ENCODE measurements at regions of chr17 and their contacts with region 1.

Region 1: GRCh38 chr17:59914274-59914854 is 21.4 kb downstream of the RPS6KB1 start:
- DNase-seq: peak; percentile 54
- H3K4me3 Mint-ChIP-seq: no peak overlapping the region
- H3K27ac Mint-ChIP-seq: no peak overlapping the region
- H3K4me1 Mint-ChIP-seq: no peaks in the 10 kb centered on the region
- H3K27me3 Mint-ChIP-seq: no peaks in the 10 kb centered on the region
- CTCF ChIP-seq: peak; percentile 36

Region 2: DNA sequence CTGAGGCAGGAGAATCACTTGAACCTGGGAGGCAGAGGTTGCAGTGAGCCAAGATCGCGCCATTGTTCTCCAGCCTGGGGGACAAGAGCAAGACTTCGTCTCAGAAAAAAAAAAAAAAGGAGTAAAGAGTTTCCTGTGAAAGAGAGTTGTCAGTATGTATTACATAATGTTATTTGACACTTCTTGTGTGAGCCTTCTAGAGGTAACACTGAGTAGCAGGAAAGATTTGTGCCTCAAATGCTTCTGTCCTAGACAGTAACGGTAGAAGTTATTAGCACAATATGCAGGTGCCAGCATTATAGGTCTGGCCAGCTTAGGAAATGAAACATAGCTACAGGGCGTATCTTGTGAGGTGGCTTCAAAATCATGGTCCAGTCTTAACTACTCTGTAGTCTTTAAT is 15.3 kb before region 1 on chr17:
- CTCF ChIA-PET with region 1: interaction called, 21 read pairs
- POLR2A ChIA-PET with region 1: interaction called, 5 read pairs
- intact Hi-C with region 1: no loop called
- DNase-seq: peak; percentile 64
- H3K4me3 Mint-ChIP-seq: no peak overlapping the region
- H3K27ac Mint-ChIP-seq: no peak overlapping the region
- H3K4me1 Mint-ChIP-seq: peaks cover 5% of the 10 kb centered on the region
- H3K27me3 Mint-ChIP-seq: no peaks in the 10 kb centered on the region
- CTCF ChIP-seq: no peak

Region 3: DNA sequence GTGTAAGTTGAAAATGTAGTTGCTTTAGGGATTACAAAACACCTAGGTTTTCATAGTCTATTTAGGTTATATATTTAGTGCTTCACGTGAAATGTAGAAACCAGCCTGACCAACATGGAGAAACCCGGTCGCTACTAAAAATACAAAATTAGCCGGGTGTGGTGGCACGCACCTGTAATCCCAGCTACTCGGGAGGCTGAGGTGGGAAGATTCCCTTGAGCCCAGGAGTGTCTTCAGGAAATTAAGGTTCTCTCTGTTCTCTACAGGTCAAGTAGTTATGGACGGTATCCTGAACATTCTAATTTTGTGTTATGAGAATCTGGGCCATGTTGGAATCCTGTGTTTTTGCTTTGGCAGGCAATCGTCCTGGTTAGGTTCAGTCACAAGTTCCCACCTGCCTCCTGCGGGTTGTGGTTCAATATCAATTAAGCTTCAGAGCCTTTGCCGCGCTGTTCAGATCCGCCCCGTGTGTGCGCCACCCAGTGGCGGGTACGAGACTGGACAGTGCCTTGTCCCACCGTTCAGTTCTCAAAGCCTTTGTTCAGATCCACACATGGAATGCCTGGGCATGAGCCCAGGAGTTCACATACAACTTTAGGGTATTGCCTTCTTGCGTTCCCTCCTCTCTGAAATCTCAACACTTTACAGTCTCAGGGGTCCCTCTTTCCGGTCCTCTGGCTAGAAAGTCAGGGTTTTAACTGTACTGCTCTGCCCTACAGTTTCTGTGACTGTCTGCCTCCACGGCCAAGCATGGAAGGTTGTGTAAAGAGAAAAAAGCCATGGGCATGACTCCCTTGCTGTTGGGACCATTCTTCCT is 122.6 kb after region 1 on chr17:
- CTCF ChIA-PET with region 1: interaction called, 15 read pairs
- POLR2A ChIA-PET with region 1: interaction called, 5 read pairs
- intact Hi-C with region 1: loop called (anchors 10 kb)
- DNase-seq: peak; percentile 73
- H3K4me3 Mint-ChIP-seq: no peak overlapping the region
- H3K27ac Mint-ChIP-seq: no peak overlapping the region
- H3K4me1 Mint-ChIP-seq: no peaks in the 10 kb centered on the region
- H3K27me3 Mint-ChIP-seq: no peaks in the 10 kb centered on the region
- CTCF ChIP-seq: peak; percentile 84